ENCODE measurements at regions of chr14 and their contacts with region 1.

Region 1: GRCh38 chr14:51283402-51284085 is 43.5 kb downstream of the TMX1 start:
- DNase-seq: no peak
- ATAC-seq: no peak
- H3K4me3 Mint-ChIP-seq: no peak overlapping the region
- H3K27ac Mint-ChIP-seq: no peak overlapping the region
- H3K4me1 Mint-ChIP-seq: peaks cover 1% of the 10 kb centered on the region
- H3K27me3 Mint-ChIP-seq: no peaks in the 10 kb centered on the region

Region 2: DNA sequence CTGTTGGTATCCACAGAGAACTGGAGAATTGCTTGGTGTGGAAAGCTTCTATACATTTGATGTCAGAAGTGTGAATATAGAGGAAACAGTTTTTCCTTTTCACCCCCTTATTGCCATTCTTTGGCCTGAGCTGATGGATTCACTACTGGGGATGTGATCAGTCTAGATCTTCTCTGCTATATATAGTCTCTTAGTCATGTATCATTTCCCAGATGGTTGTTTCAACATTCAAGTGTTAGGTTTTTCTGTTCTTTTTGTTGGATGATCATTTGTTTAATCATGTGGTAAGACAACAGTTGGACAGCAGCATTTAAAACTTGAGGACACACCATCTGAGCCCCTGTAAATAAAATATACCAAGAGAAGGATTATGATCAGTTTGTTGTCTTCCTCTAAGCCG is 13.9 kb before region 1 on chr14:
- CTCF ChIA-PET with region 1: interaction called, 19 read pairs
- POLR2A ChIA-PET with region 1: no interaction called
- DNase-seq: no peak
- ATAC-seq: no peak
- H3K4me3 Mint-ChIP-seq: no peak overlapping the region
- H3K27ac Mint-ChIP-seq: no peak overlapping the region
- H3K4me1 Mint-ChIP-seq: no peaks in the 10 kb centered on the region
- H3K27me3 Mint-ChIP-seq: no peaks in the 10 kb centered on the region

Region 3: GRCh38 chr14:51298895-51299294 is 15.4 kb after region 1 on chr14:
- CTCF ChIA-PET with region 1: interaction called, 18 read pairs
- POLR2A ChIA-PET with region 1: no interaction called
- DNase-seq: no peak
- ATAC-seq: no peak
- H3K4me3 Mint-ChIP-seq: no peak overlapping the region
- H3K27ac Mint-ChIP-seq: peak overlapping the region; percentile 59
- H3K4me1 Mint-ChIP-seq: peaks cover 14% of the 10 kb centered on the region
- H3K27me3 Mint-ChIP-seq: no peaks in the 10 kb centered on the region

Region 4: GRCh38 chr14:51651388-51652167 is 368.0 kb after region 1 on chr14 and contains the start of gene FRMD6:
- CTCF ChIA-PET with region 1: interaction called, 16 read pairs
- POLR2A ChIA-PET with region 1: no interaction called
- DNase-seq: peak; percentile 87
- ATAC-seq: peak; percentile 85
- H3K4me3 Mint-ChIP-seq: peak within 1 kb of the TSS; percentile 81
- H3K27ac Mint-ChIP-seq: peak within 1 kb of the TSS; percentile 83
- H3K4me1 Mint-ChIP-seq: peaks cover 25% of the 10 kb centered on the region
- H3K27me3 Mint-ChIP-seq: peaks cover 18% of the 10 kb centered on the region
- total RNA-seq, gene FRMD6: 3.2 to 3.5 TPM

Region 5: GRCh38 chr14:51780006-51780692 is 496.6 kb after region 1 on chr14:
- CTCF ChIA-PET with region 1: interaction called, 50 read pairs
- POLR2A ChIA-PET with region 1: no interaction called
- DNase-seq: peak; percentile 81
- ATAC-seq: peak; percentile 73
- H3K4me3 Mint-ChIP-seq: no peak overlapping the region
- H3K27ac Mint-ChIP-seq: no peak overlapping the region
- H3K4me1 Mint-ChIP-seq: peaks cover 12% of the 10 kb centered on the region
- H3K27me3 Mint-ChIP-seq: peaks cover 20% of the 10 kb centered on the region